A673 (cell line): ENCODE measurements at regions of chr3 and their contacts with region 1.

Region 1: DNA sequence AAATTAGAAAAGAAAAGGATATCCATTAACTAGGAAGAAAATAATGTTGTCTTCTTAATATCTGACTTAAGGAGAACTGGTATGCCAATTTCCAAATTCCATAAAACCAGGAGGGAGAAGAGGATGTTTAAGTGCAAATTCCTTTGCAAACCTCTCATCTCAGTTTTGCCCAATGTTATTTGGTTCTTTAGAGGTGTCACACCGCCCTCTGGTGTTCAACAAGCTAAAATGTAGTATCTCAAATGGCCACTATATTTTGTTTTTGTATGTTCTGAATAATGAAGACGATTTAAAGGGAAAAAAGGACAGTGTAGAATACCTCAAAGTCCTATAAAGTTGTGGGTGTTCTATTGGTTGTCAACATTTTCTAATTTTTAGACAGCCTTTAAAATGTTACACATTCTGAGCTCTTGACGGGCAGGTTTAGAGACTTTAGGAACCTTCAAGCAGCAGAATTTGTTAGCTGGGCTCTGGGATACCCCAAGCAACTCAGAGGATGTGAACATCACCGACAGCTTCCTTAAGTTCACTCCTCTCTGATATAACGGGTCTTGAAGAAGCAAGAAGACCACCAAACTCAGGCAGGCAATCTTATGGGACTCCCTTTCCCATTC is 458.3 kb downstream of the MFSD1 start:
- DNase-seq: peak; percentile 67
- H3K4me3 ChIP-seq: no peak overlapping the region
- H3K27ac ChIP-seq: no peak overlapping the region
- H3K4me1 ChIP-seq: no peaks in the 10 kb centered on the region
- H3K27me3 ChIP-seq: peaks cover 21% of the 10 kb centered on the region
- CTCF ChIP-seq: peak; percentile 74

Region 2: GRCh38 chr3:158407844-158408517 is 852.2 kb before region 1 on chr3:
- CTCF ChIA-PET with region 1: no interaction called
- POLR2A ChIA-PET with region 1: no interaction called
- intact Hi-C with region 1: no loop called
- DNase-seq: no peak
- H3K4me3 ChIP-seq: no peak overlapping the region
- H3K27ac ChIP-seq: no peak overlapping the region
- H3K4me1 ChIP-seq: peaks cover 12% of the 10 kb centered on the region
- H3K27me3 ChIP-seq: no peaks in the 10 kb centered on the region
- CTCF ChIP-seq: no peak

Region 3: DNA sequence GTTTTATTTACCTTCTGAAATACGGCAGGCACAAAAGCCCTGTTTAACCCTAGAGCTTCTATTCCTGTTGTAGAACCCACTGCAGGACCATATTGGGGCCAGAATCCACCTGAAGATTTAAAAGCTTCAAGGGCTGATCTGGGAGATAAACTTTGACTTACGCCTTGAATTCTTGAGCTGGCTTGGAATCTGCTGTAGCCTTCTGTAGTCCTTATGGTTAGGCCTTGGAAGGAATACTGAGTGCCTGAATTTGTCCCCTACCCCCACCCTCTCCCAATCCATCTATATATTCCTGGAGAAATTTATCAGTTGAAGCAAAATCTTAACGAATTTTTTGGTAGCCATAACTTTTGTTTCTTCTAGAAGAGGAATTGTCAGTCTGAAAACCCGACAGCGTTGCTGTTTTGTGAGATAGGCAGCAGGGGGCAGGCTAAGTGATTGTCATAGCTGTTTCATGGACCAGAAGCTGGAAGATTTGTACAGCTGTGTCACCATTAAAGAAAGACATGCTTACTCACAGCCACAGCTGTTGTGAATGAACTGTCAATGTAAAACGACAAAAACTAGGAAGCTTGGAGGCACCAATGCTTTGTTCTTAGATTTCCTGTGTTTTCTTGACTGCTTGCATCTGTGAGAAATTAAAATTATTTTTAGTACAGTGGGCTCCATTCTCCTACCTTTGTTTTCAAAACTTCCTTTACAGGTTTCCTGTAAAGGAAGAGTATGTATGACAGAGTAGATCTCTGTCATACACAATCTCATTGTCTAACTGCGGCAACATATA is 600.5 kb before region 1 on chr3:
- CTCF ChIA-PET with region 1: interaction called, 3 read pairs
- POLR2A ChIA-PET with region 1: no interaction called
- intact Hi-C with region 1: loop called (anchors 5 kb)
- DNase-seq: peak; percentile 76
- H3K4me3 ChIP-seq: no peak overlapping the region
- H3K27ac ChIP-seq: no peak overlapping the region
- H3K4me1 ChIP-seq: no peaks in the 10 kb centered on the region
- H3K27me3 ChIP-seq: no peaks in the 10 kb centered on the region
- CTCF ChIP-seq: peak; percentile 78

Region 4: DNA sequence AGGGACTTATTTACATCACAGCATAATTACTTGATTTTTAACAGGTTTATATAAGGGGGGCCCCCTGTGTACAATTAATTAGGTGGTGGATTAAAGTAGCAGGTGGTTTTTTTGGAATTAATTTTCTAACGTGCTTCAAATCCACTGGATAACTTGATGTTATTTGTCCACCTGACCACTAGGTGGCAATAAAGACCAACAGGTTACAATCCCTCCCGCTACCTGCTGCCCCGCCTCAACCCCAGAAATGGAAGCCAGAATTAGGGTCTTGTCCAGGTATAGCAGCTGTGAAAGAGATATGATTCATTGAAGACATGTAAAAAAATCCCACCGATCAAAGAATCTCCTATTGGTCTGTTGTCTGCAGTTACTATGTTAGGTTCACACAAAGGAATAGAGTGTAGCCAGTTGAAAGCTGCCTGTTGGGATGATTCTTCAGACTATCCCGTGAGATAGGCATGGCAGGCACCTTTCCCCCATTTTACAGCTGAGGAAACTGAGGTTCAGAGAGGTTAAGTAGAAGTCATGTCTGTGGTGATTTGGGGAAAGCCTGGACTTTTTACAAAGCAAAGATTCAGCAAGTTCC is 414.3 kb before region 1 on chr3:
- CTCF ChIA-PET with region 1: interaction called, 11 read pairs
- POLR2A ChIA-PET with region 1: no interaction called
- intact Hi-C with region 1: loop called (anchors 1 kb)
- DNase-seq: peak; percentile 41
- H3K4me3 ChIP-seq: no peak overlapping the region
- H3K27ac ChIP-seq: no peak overlapping the region
- H3K4me1 ChIP-seq: no peaks in the 10 kb centered on the region
- H3K27me3 ChIP-seq: peaks cover 13% of the 10 kb centered on the region
- CTCF ChIP-seq: peak; percentile 73

Region 5: GRCh38 chr3:158875700-158876099 is 384.5 kb before region 1 on chr3:
- CTCF ChIA-PET with region 1: no interaction called
- POLR2A ChIA-PET with region 1: no interaction called
- intact Hi-C with region 1: no loop called
- DNase-seq: no peak
- H3K4me3 ChIP-seq: no peak overlapping the region
- H3K27ac ChIP-seq: no peak overlapping the region
- H3K4me1 ChIP-seq: no peaks in the 10 kb centered on the region
- H3K27me3 ChIP-seq: no peaks in the 10 kb centered on the region
- CTCF ChIP-seq: no peak

Region 6: DNA sequence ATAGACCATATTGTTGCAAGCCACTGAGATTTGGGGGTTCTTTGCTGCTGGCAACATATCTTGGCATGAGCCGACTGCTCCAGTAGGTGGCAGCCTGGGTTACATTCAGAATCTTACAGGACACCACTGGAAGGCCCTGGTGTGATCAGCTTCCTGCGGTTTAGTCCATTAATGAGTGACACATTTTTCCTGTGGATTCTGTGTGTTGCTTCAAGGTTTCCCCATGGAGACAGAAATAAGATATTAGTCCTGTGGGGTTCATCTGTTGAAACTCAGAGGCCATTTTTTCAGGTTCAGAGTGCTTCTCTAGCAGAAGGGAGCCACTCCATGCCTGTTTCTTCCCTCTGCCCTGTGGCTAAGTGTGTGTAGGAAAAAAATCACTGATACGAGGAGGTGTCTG is 342.1 kb before region 1 on chr3:
- CTCF ChIA-PET with region 1: no interaction called
- POLR2A ChIA-PET with region 1: no interaction called
- intact Hi-C with region 1: loop called (anchors 2 kb)
- DNase-seq: peak; percentile 73
- H3K4me3 ChIP-seq: no peak overlapping the region
- H3K27ac ChIP-seq: no peak overlapping the region
- H3K4me1 ChIP-seq: no peaks in the 10 kb centered on the region
- H3K27me3 ChIP-seq: peaks cover 5% of the 10 kb centered on the region
- CTCF ChIP-seq: peak; percentile 79

Region 7: DNA sequence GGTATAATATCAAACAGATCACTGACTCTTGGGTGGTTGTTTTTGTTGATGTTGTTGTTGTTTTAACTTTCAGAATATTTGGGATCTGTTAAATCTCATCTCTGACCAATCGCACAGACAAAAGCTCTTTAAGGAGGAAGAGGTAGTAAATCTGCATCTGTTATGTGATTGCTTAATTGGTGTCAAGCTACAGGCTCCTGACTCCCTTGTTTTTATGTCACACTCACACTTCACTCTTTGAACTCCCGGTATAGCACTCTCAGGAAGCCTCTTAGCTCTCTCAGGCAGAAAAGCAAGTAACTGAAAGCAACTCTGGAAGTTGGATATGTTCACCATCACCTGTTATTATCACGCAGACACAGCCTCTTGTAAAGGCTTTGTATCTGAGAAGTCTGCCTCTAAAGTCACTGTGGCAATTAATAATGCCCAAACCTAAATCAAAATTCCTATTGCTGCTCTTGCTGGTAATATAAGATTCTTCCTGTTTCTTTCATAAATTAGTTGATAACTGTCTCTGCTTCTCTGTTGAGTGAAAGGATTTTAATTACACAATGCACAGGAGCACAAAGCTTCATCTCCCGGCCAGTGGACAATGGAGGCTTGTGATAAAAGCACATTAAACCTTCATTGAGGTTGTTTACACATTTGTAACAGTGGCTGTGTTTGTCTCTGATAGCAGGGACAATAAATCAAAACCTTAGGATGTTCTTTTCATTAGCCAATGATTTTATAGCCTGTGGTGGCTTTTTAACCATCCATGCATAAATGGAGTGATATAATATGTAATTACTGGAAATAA is 118.4 kb after region 1 on chr3:
- CTCF ChIA-PET with region 1: no interaction called
- POLR2A ChIA-PET with region 1: no interaction called
- intact Hi-C with region 1: no loop called
- DNase-seq: no peak
- H3K4me3 ChIP-seq: no peak overlapping the region
- H3K27ac ChIP-seq: no peak overlapping the region
- H3K4me1 ChIP-seq: no peaks in the 10 kb centered on the region
- H3K27me3 ChIP-seq: no peaks in the 10 kb centered on the region
- CTCF ChIP-seq: no peak

Region 8: DNA sequence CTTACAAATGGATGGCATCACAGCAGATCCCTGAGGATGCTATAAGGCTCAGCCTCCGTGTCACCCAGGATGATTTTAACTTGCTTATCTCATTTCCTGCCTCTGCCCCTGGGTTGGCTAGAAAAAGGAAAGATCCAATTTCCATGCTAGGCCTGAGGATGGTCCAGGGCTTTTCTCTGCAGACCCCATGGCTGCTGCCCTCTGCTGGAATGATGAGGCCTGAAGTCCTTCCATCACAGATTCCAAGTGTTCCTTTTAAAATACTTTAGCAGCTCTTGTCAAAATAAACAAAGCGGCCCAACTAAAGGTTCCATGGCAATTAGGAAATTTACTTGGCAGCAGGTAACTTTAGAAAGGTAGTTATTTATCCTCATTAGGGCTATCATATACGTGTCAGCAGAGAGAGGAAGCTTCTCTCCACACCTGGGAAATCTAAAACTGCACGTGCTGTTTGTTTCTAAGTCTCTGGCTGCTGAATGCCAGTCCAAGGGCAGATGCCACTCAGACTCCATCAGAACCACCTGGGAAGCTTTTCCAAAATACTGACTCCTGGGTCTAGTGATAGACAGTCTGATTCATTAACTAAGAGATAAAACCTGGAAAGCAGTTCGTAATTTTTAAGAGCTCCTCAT is 326.5 kb after region 1 on chr3:
- CTCF ChIA-PET with region 1: no interaction called
- POLR2A ChIA-PET with region 1: no interaction called
- intact Hi-C with region 1: loop called (anchors 2 kb)
- DNase-seq: peak; percentile 53
- H3K4me3 ChIP-seq: no peak overlapping the region
- H3K27ac ChIP-seq: no peak overlapping the region
- H3K4me1 ChIP-seq: no peaks in the 10 kb centered on the region
- H3K27me3 ChIP-seq: no peaks in the 10 kb centered on the region
- CTCF ChIP-seq: peak; percentile 62

Region 9: GRCh38 chr3:159804726-159805410 is 544.7 kb after region 1 on chr3:
- CTCF ChIA-PET with region 1: interaction called, 5 read pairs
- POLR2A ChIA-PET with region 1: no interaction called
- intact Hi-C with region 1: loop called (anchors 2 kb)
- DNase-seq: peak; percentile 90
- H3K4me3 ChIP-seq: no peak overlapping the region
- H3K27ac ChIP-seq: no peak overlapping the region
- H3K4me1 ChIP-seq: no peaks in the 10 kb centered on the region
- H3K27me3 ChIP-seq: no peaks in the 10 kb centered on the region
- CTCF ChIP-seq: peak; percentile 93

Region 10: DNA sequence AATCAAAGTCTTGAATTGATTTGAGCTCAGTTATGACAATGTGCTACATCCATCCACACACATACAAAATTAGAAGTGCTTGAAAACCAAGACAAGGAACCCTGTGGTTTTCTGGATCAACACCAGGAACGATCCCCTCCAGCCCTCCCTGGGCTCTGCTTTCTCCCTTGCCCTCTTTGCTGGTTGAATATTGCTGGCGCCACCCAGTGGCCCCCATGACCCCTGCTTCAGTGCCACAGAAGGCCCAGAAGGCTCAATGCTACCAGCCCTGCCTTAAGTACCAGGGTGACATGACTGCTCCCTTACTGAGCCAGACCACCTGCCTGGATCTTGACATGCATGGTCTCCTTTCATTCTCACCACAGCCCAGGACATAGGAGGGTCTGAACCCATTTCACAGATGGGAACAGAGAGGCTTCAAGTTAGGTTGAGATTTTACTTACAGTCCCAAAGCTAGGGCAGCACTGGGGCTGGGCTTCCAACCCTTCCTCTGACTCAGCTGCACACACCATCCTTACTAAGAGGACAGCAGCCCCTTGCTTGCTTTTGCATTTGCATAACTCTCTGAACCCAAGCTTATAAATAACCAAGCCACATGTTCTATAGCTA is 743.5 kb after region 1 on chr3:
- CTCF ChIA-PET with region 1: no interaction called
- POLR2A ChIA-PET with region 1: no interaction called
- intact Hi-C with region 1: loop called (anchors 2 kb)
- DNase-seq: peak; percentile 65
- H3K4me3 ChIP-seq: no peak overlapping the region
- H3K27ac ChIP-seq: no peak overlapping the region
- H3K4me1 ChIP-seq: no peaks in the 10 kb centered on the region
- H3K27me3 ChIP-seq: no peaks in the 10 kb centered on the region
- CTCF ChIP-seq: peak; percentile 57